CD4-positive, alpha-beta memory T cell (primary cell): ENCODE measurements at regions of chr22 and their contacts with region 1.

Region 1: DNA sequence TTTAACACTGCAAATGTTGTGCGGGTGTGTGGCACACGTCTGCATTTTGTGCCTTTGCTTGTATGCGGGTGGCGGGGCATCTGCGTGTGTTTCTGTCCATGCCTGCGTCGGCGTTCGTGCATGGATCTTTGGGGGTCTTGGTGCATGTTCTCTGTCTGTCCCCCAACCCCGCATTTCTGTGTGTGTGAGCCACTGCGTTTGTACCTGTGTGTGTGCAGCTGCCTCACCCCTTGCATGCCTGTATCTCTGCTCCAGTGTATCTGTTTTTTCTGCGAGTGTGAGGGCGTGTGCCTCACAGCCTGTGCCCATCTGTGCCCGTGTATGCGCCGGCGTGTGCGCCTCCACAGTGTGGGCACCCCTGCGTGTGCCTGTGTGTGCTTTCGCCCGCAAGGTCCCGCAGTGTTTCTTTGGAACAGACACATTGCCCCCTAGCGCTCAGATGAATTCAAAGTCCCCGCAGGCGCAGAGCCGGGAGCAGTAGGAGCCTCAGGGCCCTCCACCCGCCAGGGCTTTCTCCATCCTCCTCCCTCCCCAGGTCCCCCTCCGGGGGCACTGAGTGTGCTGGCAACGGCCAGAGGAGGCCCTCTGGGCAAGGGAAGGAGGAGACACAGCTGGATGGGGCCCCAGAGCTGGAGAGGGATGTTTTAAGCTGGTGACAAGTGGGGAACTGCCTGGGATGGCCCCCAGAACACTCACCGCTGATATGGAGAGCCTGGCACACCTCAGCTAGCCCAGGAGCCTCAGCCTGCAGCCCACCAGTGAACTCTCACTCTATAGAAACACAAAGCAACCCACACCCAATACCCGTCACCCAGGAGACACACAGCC is 3.1 kb upstream of the MN1 start:
- DNase-seq: peak in 4 of 5 donors; percentile 33 to 40 (median 38)
- H3K4me3 ChIP-seq: no peak overlapping the region
- H3K4me3 Mint-ChIP-seq: peak overlapping the region; percentile 23 to 90 (median 74)
- H3K27ac ChIP-seq: no peak overlapping the region
- H3K27ac Mint-ChIP-seq: peak overlapping the region in 1 of 7 donors; percentile 70
- H3K4me1 ChIP-seq: peaks cover 21% of the 10 kb centered on the region
- H3K4me1 Mint-ChIP-seq: peaks cover 13 to 23% (median 15%) of the 10 kb centered on the region in 4 donors
- H3K27me3 ChIP-seq: peaks cover 6% of the 10 kb centered on the region
- H3K27me3 Mint-ChIP-seq: peaks cover 16 to 23% of the 10 kb centered on the region in 2 donors

Region 2: GRCh38 chr22:26377170-26377830 is 1427.4 kb before region 1 on chr22:
- CTCF ChIA-PET with region 1: no interaction called
- POLR2A ChIA-PET with region 1: no interaction called
- intact Hi-C with region 1: loop called (anchors 5 kb)
- DNase-seq: no peak
- H3K4me3 ChIP-seq: no peak overlapping the region
- H3K4me3 Mint-ChIP-seq: peak overlapping the region in 4 of 8 donors; percentile 0 to 30 (median 8)
- H3K27ac ChIP-seq: no peak overlapping the region
- H3K27ac Mint-ChIP-seq: no peak overlapping the region
- H3K4me1 ChIP-seq: peaks cover 6% of the 10 kb centered on the region
- H3K4me1 Mint-ChIP-seq: peaks cover 4 to 7% (median 5%) of the 10 kb centered on the region in 4 donors
- H3K27me3 ChIP-seq: no peaks in the 10 kb centered on the region
- H3K27me3 Mint-ChIP-seq: peaks cover 40 to 45% of the 10 kb centered on the region in 2 donors

Region 3: DNA sequence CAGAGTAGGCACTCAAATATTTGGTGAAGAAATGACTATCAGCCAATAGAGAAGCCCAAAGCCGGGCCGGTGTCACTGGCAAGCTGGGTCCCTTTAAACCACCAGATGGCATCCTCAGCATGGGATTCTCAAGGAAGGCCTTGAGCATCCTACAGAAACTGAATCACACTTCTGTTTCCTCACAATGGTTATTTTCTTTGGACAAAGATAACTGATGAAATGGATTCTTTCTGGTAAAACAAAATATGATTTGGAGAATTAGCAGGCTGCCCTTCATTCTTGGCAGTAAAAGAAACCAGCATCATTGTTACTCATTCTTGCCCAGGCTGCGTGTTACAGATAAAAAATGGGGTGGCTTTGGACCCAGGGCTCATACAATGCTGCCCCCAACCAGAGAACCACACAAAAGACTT is 1405.9 kb before region 1 on chr22:
- CTCF ChIA-PET with region 1: no interaction called
- POLR2A ChIA-PET with region 1: no interaction called
- intact Hi-C with region 1: loop called (anchors 2 kb)
- DNase-seq: peak; percentile 36 to 56 (median 46)
- H3K4me3 ChIP-seq: no peak overlapping the region
- H3K4me3 Mint-ChIP-seq: no peak overlapping the region
- H3K27ac ChIP-seq: no peak overlapping the region
- H3K27ac Mint-ChIP-seq: no peak overlapping the region
- H3K4me1 ChIP-seq: no peaks in the 10 kb centered on the region
- H3K4me1 Mint-ChIP-seq: no peaks in the 10 kb centered on the region
- H3K27me3 ChIP-seq: no peaks in the 10 kb centered on the region
- H3K27me3 Mint-ChIP-seq: peaks cover 5 to 6% of the 10 kb centered on the region in 2 donors

Region 4: DNA sequence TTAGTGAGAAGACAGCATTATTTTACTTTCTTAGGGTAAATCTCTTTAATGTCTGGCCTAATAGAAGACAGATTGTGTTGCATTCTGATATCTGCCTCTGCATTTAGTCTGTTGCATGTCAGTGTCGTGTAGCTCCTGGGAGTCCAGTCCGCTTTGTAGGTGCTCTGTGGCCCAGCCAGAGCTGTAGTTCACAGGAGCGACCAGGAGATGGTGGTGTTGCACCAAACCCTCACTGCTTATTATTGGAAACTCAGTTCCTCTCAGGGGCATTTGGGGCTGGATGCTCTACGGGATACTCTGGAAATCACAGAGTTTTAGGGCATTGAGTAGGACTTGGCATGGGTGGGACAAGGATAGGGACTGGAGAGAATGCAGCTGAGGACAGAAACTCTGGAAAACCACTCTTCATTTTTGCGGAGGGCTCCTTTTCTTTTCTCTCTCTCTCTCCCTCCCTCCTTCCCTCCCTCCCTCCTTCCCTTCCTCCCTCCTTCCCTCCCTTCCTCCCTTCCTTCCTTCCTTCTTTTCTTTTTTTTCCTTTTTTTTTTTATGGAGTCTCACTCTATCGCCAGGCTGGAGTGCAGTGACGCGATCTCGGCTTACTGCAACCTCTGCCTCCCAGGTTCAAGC is 1125.6 kb before region 1 on chr22:
- CTCF ChIA-PET with region 1: interaction called, 6 read pairs
- POLR2A ChIA-PET with region 1: no interaction called
- intact Hi-C with region 1: loop called (anchors 1 kb)
- DNase-seq: peak; percentile 53 to 67 (median 61)
- H3K4me3 ChIP-seq: no peak overlapping the region
- H3K4me3 Mint-ChIP-seq: peak overlapping the region in 7 of 8 donors; percentile 25 to 80 (median 42)
- H3K27ac ChIP-seq: no peak overlapping the region
- H3K27ac Mint-ChIP-seq: peak overlapping the region; percentile 24 to 86 (median 79)
- H3K4me1 ChIP-seq: peaks cover 54% of the 10 kb centered on the region
- H3K4me1 Mint-ChIP-seq: peaks cover 56 to 73% (median 64%) of the 10 kb centered on the region in 4 donors
- H3K27me3 ChIP-seq: no peaks in the 10 kb centered on the region
- H3K27me3 Mint-ChIP-seq: no peaks in the 10 kb centered on the region

Region 5: GRCh38 chr22:26689513-26690301 is 1115.0 kb before region 1 on chr22:
- CTCF ChIA-PET with region 1: no interaction called
- POLR2A ChIA-PET with region 1: no interaction called
- intact Hi-C with region 1: loop called (anchors 5 kb)
- DNase-seq: no peak
- H3K4me3 ChIP-seq: no peak overlapping the region
- H3K4me3 Mint-ChIP-seq: no peak overlapping the region
- H3K27ac ChIP-seq: no peak overlapping the region
- H3K27ac Mint-ChIP-seq: peak overlapping the region in 5 of 7 donors; percentile 18 to 81 (median 58)
- H3K4me1 ChIP-seq: peaks cover 49% of the 10 kb centered on the region
- H3K4me1 Mint-ChIP-seq: peaks cover 44 to 79% (median 66%) of the 10 kb centered on the region in 4 donors
- H3K27me3 ChIP-seq: no peaks in the 10 kb centered on the region
- H3K27me3 Mint-ChIP-seq: no peaks in the 10 kb centered on the region

Region 6: DNA sequence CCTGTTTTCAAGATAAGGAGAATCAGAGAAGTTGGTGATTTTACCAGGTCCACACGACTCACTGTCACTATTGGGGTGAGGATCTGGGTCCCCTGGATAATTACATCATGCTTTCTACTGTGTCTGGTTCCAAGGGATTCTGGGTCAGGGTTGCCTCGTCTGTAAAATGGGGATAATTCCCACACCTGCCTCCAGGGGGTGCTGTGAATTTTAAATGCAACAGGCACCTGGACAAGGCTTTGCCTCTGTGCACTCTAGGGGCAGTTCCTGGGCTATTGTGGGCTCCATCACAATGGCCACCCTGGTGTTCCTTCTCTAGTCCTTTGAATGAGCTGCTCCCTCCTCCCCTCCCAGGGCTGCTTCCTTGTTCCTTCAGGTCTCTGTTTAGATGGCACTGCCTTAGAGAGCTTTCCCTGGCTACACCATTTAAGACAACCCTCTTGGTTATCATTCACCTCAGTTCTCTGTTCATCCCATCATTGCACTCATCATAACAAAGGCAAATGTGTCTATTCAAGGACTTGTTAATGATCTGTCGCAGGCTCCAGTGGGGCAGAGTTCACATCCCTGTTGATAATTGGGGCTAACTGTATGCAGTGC is 968.7 kb before region 1 on chr22:
- CTCF ChIA-PET with region 1: no interaction called
- POLR2A ChIA-PET with region 1: no interaction called
- intact Hi-C with region 1: loop called (anchors 5 kb)
- DNase-seq: peak in 4 of 5 donors; percentile 4 to 16 (median 10)
- H3K4me3 ChIP-seq: no peak overlapping the region
- H3K4me3 Mint-ChIP-seq: no peak overlapping the region
- H3K27ac ChIP-seq: no peak overlapping the region
- H3K27ac Mint-ChIP-seq: peak overlapping the region in 1 of 7 donors; percentile 21
- H3K4me1 ChIP-seq: no peaks in the 10 kb centered on the region
- H3K4me1 Mint-ChIP-seq: no peaks in the 10 kb centered on the region
- H3K27me3 ChIP-seq: no peaks in the 10 kb centered on the region
- H3K27me3 Mint-ChIP-seq: no peaks in the 10 kb centered on the region